ENCODE measurements at regions of chr4 and their contacts with region 1.

Region 1: GRCh38 chr4:86934771-86935565 is at the start of gene AFF1:
- DNase-seq: peak; percentile 74 to 91 (median 81)
- ATAC-seq: peak; percentile 90
- H3K4me3 ChIP-seq: peak within 1 kb of the TSS; percentile 91
- H3K4me3 Mint-ChIP-seq: peak within 1 kb of the TSS; percentile 92 to 97 (median 94)
- H3K27ac ChIP-seq: peak within 1 kb of the TSS; percentile 90
- H3K27ac Mint-ChIP-seq: peak within 1 kb of the TSS; percentile 91 to 97 (median 96)
- H3K4me1 ChIP-seq: peaks cover 29% of the 10 kb centered on the region in 2 donors
- H3K4me1 Mint-ChIP-seq: peaks cover 37 to 61% (median 53%) of the 10 kb centered on the region in 7 donors
- H3K27me3 ChIP-seq: no peaks in the 10 kb centered on the region
- H3K27me3 Mint-ChIP-seq: no peaks in the 10 kb centered on the region
- total RNA-seq, gene AFF1: 65.8 to 88.6 (median 78.7) TPM

Region 2: DNA sequence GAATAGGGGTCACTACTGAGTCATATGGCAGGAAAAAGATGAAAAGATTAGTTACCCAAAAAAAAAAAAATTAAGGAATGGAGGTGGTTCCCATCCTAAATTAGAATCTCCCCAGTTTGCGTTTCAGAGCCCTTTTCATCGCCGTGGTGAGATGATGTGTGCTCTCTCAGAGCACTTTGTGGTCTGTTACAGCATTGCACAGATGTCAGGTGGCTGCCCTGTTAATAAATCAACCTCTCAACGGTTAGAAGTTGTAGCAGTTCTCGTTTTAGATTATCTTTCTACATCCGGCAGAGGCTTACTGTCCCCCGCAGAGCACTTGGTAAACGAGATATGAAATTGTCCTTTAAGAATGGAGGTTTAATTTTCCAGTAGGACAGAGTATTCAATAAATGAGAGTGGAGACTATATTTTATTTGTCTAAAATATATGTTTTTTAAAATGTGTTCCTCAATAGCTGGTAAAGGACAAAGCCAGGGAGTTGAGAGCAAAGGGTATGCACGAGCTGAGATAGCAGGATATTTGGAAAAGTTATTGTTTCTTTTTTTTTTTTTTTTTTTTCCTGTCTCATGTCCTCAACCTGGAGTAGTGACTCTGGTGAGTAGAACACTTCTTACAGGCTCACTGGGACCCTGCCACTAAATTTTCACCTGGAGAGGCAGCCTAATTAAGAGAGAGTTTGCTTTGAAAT is 26.8 kb after region 1 on chr4:
- CTCF ChIA-PET with region 1: interaction called, 3 read pairs
- POLR2A ChIA-PET with region 1: interaction called, 3 read pairs
- intact Hi-C with region 1: loop called in 1 of 2 experiments (anchors 2 kb)
- DNase-seq: peak in 1 of 9 donors; percentile 28
- ATAC-seq: peak; percentile 83
- H3K4me3 ChIP-seq: no peak overlapping the region
- H3K4me3 Mint-ChIP-seq: peak overlapping the region in 9 of 10 donors; percentile 7 to 61 (median 51)
- H3K27ac ChIP-seq: no peak overlapping the region
- H3K27ac Mint-ChIP-seq: peak overlapping the region in 6 of 9 donors; percentile 4 to 69 (median 16)
- H3K4me1 ChIP-seq: peaks cover 0 to 7% of the 10 kb centered on the region in 2 donors
- H3K4me1 Mint-ChIP-seq: peaks cover 10 to 53% (median 37%) of the 10 kb centered on the region in 7 donors
- H3K27me3 ChIP-seq: no peaks in the 10 kb centered on the region
- H3K27me3 Mint-ChIP-seq: no peaks in the 10 kb centered on the region

Region 3: DNA sequence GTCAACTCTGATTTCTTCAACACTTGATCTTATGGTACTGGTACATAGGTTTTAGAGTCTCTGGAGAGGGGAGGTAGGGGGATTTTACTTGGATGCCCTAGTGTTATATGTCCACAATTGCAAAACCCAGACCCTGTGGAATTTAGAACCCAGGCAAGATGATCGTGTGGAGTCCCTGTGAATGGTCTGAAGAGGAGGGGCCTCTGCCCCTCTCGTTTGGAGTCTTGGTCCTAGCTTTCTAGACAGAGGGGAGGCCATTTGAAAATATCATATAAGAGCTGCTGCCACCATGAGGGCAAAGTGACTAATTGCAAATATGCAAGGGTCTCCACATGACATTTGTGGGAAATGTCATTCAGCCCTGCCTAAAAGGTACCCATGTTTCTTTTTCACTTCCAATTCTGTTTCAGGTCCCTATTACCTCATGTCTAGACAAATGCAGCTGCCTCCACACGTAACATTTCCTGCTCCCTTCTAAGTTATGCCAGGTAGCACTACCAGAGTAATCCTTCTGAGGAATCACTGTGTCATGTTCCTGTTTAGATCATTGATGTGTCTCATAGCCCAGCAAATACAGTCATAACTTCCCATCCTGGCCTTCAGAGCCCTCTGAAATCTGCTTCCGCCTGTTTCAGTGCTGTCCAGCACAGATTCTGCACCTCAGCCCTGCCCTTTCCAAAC is 158.6 kb after region 1 on chr4:
- CTCF ChIA-PET with region 1: interaction called, 18 read pairs
- POLR2A ChIA-PET with region 1: interaction called, 4 read pairs
- intact Hi-C with region 1: loop called (anchors 1 kb)
- DNase-seq: peak in 7 of 9 donors; percentile 26 to 60 (median 51)
- ATAC-seq: peak; percentile 90
- H3K4me3 ChIP-seq: no peak overlapping the region
- H3K4me3 Mint-ChIP-seq: no peak overlapping the region
- H3K27ac ChIP-seq: no peak overlapping the region
- H3K27ac Mint-ChIP-seq: peak overlapping the region; percentile 26 to 91 (median 74)
- H3K4me1 ChIP-seq: no peaks in the 10 kb centered on the region
- H3K4me1 Mint-ChIP-seq: peaks cover 10 to 47% (median 25%) of the 10 kb centered on the region in 7 donors
- H3K27me3 ChIP-seq: no peaks in the 10 kb centered on the region
- H3K27me3 Mint-ChIP-seq: no peaks in the 10 kb centered on the region

Region 4: GRCh38 chr4:87235020-87235671 is 300.2 kb after region 1 on chr4:
- CTCF ChIA-PET with region 1: no interaction called
- POLR2A ChIA-PET with region 1: no interaction called
- intact Hi-C with region 1: loop called in 1 of 2 experiments (anchors 5 kb)
- DNase-seq: no peak
- ATAC-seq: no peak
- H3K4me3 ChIP-seq: peak overlapping the region; percentile 36
- H3K4me3 Mint-ChIP-seq: peak overlapping the region; percentile 62 to 87 (median 83)
- H3K27ac ChIP-seq: no peak overlapping the region
- H3K27ac Mint-ChIP-seq: peak overlapping the region in 2 of 9 donors; percentile 61 to 66
- H3K4me1 ChIP-seq: peaks cover 0 to 4% of the 10 kb centered on the region in 2 donors
- H3K4me1 Mint-ChIP-seq: peaks cover 0 to 6% (median 0%) of the 10 kb centered on the region in 7 donors
- H3K27me3 ChIP-seq: no peaks in the 10 kb centered on the region
- H3K27me3 Mint-ChIP-seq: peaks cover 0 to 18% (median 5%) of the 10 kb centered on the region in 5 donors

Region 5: DNA sequence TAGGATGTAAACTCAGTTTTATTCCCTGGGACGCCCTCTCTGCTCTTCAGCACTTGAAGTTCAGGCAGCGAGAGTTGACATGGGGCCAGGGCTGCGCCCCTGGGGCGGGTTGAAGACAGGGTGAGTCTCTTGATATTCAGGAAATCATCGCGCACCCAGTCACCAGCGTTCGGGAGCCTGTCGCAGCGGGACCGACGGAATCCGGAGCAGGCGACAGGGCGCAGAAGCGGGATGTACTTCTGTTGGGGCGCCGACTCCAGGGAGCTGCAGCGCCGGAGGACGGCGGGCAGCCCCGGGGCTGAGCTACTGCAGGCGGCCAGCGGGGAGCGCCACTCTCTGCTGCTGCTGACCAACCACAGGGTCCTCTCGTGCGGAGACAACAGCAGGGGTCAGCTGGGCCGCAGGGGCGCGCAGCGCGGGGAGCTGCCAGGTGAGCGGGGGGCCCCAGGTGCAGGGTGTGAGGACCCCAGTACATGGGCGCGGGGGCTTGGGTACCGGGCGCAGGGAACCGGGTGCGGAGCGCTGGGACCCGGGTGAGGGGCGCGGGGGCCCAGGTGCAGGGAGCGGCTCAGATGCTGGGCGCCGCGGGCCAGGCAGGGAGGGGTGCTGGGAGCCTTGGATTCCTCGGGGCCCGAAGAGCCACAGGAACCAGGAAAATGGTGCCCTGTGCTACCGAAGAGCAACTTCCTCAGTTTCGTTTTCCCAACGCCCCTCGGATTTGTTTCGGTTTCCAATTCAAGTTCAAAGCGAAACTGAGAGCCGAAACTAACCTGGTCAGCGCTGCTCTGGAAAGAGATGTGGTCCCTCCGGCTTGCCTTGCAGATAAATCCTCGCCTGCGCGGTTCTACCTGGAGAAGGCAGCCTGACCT is 1444.0 kb after region 1 on chr4 and contains the start of gene HERC6:
- CTCF ChIA-PET with region 1: no interaction called
- POLR2A ChIA-PET with region 1: no interaction called
- intact Hi-C with region 1: loop called (anchors 10 kb)
- DNase-seq: peak; percentile 49 to 77 (median 70)
- ATAC-seq: peak; percentile 80
- H3K4me3 ChIP-seq: peak within 1 kb of the TSS; percentile 95
- H3K4me3 Mint-ChIP-seq: peak within 1 kb of the TSS; percentile 88 to 98 (median 94)
- H3K27ac ChIP-seq: peak within 1 kb of the TSS; percentile 92
- H3K27ac Mint-ChIP-seq: peak within 1 kb of the TSS; percentile 91 to 99 (median 94)
- H3K4me1 ChIP-seq: peaks cover 21 to 27% of the 10 kb centered on the region in 2 donors
- H3K4me1 Mint-ChIP-seq: peaks cover 24 to 60% (median 46%) of the 10 kb centered on the region in 7 donors
- H3K27me3 ChIP-seq: no peaks in the 10 kb centered on the region
- H3K27me3 Mint-ChIP-seq: no peaks in the 10 kb centered on the region
- total RNA-seq, gene HERC6: 12.6 to 43.5 (median 23.0) TPM